PC-9 (cell line): ENCODE measurements at regions of chr2 and their contacts with region 1.

Region 1: GRCh38 chr2:237650455-237650850 is 23.1 kb downstream of the LRRFIP1 start:
- DNase-seq: peak; percentile 96 to 97
- H3K4me3 ChIP-seq: no peak overlapping the region
- H3K27ac ChIP-seq: no peak overlapping the region
- H3K4me1 ChIP-seq: peaks cover 19% of the 10 kb centered on the region
- H3K27me3 ChIP-seq: no peaks in the 10 kb centered on the region
- CTCF ChIP-seq: no peak

Region 2: GRCh38 chr2:237616734-237617586 is 33.5 kb before region 1 on chr2:
- CTCF ChIA-PET with region 1: no interaction called
- POLR2A ChIA-PET with region 1: no interaction called
- intact Hi-C with region 1: loop called (anchors 1 kb)
- DNase-seq: peak in 1 of 2 experiments; percentile 50
- H3K4me3 ChIP-seq: no peak overlapping the region
- H3K27ac ChIP-seq: no peak overlapping the region
- H3K4me1 ChIP-seq: peaks cover 19% of the 10 kb centered on the region
- H3K27me3 ChIP-seq: no peaks in the 10 kb centered on the region
- CTCF ChIP-seq: no peak